Vagina (tissue), 2 donors: ENCODE measurements at regions of chr3 and their contacts with region 1.

Region 1: DNA sequence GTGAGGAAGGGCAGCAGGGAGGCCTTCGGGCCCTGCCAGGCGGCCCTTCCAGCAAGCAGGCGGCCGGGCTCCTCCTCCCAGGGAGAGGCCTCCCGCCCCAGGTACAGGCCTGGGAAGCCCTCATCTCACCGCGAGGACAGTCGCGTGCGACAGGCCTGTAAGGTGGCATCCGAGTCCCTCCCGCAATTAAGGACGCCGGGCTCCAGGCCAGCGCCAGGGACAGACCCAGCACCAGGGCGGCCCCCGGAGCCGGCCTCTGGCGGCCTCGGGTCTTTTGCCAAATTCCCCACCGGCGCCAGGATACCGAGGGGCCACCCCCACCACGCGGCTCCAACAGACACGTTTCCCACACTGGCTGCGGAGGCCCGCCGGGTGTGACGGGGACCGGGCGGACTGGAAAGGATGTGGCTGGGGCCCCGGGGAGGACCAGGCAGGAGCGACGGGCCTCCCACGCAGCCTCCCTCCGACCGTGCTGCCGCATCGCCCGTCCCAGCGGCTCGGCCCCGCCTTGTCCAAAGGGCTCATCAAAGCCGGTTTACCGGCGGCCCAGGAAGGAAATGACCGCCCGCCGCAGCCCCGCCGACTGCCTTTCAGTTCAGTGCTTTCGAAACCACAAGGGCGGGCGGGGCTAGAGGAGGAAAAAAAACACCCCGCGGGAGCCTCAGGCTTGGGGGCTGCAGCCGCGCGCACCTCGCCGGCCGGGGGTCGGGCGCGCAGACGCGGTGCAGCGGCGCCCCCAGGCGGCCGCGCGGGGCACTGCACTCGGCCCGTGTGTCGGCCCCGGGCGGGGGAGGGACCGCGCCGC is 11.3 kb downstream of the XXYLT1 start:
- DNase-seq: peak; percentile 94 to 95
- H3K4me3 ChIP-seq: peak overlapping the region; percentile 74 to 81
- H3K27ac ChIP-seq: peak overlapping the region; percentile 94
- H3K4me1 ChIP-seq: peaks cover 49% of the 10 kb centered on the region
- H3K27me3 ChIP-seq: no peaks in the 10 kb centered on the region
- CTCF ChIP-seq: peak in 2 of 3 experiments; percentile 8 to 57
- POLR2A ChIP-seq: peak in 1 of 2 donors; percentile 78

Region 2: DNA sequence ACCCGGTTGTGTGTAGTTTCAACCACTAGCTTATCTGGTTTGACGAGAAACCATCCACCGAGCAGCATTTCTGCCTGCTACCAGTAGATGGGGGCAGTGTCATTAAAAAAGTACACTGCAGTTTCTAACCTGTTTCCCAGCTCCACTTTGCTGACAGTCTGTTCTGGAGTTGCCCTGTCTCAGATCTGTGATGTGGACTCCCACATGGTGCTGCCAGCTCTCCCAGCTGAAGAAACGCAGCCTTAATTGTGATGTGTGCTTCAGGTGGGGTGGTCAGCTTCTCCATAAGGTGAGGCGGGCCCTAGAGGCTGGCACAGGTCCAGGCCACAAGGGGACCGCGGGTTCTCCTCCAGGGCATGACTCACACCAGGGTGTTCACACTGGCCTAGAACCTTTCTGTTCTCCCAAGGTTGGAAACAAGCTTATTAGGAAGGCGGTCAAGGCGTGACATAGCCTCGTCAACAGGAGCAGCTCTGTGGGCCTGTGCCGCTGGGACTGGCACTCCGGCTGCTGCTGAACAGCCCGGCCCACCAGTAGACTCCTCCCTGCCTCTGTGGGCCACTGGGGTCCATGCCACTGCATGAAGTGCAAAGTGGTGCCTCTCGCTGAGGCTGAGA is 576.9 kb before region 1 on chr3:
- intact Hi-C with region 1: loop called (anchors 1 kb)
- DNase-seq: peak in 1 of 2 donors; percentile 90
- H3K4me3 ChIP-seq: no peak overlapping the region
- H3K27ac ChIP-seq: peak overlapping the region; percentile 47
- H3K4me1 ChIP-seq: peaks cover 25% of the 10 kb centered on the region
- H3K27me3 ChIP-seq: no peaks in the 10 kb centered on the region
- CTCF ChIP-seq: peak; percentile 67 to 95 (median 82)
- POLR2A ChIP-seq: no peak

Region 3: DNA sequence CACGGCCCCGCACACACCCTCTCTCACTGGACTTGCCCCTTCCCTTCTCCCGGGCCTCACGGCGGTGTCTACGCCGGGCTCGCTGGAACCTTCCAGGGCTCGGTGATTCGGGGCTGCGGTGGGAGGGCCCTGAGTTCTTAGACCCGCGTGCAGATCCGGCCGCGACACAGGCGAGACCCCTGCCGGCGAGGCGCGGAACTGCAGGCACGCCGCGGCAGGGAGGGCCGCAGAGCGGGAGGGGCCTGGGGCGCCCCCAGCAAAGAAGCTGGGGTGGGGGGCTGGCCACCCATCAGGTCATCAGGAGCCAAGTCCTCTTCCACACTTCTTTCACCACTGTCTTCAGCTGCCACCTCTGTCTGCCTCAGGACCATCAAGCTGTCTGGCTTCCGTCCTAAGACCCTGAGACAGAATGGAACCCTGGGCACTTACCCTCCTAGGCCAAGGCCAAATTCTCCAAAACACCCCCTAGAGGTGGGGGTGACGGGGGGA is 153.2 kb before region 1 on chr3:
- intact Hi-C with region 1: loop called (anchors 5 kb)
- DNase-seq: no peak
- H3K4me3 ChIP-seq: peak overlapping the region in 1 of 2 donors; percentile 25
- H3K27ac ChIP-seq: peak overlapping the region; percentile 8
- H3K4me1 ChIP-seq: peaks cover 36% of the 10 kb centered on the region
- H3K27me3 ChIP-seq: no peaks in the 10 kb centered on the region
- CTCF ChIP-seq: peak; percentile 97 to 99 (median 98)
- POLR2A ChIP-seq: no peak

Region 4: DNA sequence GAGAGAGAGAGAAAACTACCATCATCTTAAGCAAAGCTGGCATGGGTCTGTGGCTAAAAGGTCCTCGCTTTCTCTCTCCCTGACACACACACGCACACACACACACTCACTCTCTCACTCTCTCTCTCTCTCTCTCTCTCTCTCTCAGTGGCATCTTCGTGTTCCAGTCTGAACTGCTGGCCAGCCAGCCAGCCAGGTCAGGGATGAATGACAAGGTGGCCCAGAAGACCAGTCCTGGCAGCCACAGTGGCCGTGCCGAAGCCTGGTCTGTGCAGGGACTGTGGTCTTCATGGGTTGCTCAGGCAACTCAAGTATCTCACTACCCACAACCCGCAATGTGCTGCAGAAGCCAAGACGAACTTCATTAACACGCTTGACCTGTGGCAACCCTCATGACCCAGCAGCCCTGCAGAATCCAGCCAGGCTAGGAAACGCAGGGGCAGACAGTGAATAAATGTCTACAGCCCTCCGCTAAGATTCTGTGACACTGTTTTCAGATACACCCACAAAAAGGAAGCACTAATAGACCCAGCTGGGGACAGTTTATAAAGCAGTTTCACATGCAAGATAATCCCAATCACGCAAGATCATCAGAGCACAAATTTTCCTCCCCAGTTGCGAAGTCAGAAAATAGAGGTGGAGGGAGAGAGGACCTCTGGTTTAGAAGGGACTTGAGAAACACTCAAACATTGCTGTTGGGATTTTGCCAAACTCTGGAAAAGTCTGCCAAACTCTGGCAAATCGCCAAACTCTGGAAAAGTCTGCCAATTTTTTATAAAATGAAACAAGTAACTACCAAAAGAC is 55.1 kb before region 1 on chr3:
- intact Hi-C with region 1: loop called (anchors 10 kb)
- DNase-seq: peak; percentile 74 to 84
- H3K4me3 ChIP-seq: no peak overlapping the region
- H3K27ac ChIP-seq: peak overlapping the region; percentile 15
- H3K4me1 ChIP-seq: peaks cover 40% of the 10 kb centered on the region
- H3K27me3 ChIP-seq: no peaks in the 10 kb centered on the region
- CTCF ChIP-seq: no peak
- POLR2A ChIP-seq: no peak